IMR-90 (cell line): ENCODE measurements at regions of chr1 and their contacts with region 1.

Region 1: DNA sequence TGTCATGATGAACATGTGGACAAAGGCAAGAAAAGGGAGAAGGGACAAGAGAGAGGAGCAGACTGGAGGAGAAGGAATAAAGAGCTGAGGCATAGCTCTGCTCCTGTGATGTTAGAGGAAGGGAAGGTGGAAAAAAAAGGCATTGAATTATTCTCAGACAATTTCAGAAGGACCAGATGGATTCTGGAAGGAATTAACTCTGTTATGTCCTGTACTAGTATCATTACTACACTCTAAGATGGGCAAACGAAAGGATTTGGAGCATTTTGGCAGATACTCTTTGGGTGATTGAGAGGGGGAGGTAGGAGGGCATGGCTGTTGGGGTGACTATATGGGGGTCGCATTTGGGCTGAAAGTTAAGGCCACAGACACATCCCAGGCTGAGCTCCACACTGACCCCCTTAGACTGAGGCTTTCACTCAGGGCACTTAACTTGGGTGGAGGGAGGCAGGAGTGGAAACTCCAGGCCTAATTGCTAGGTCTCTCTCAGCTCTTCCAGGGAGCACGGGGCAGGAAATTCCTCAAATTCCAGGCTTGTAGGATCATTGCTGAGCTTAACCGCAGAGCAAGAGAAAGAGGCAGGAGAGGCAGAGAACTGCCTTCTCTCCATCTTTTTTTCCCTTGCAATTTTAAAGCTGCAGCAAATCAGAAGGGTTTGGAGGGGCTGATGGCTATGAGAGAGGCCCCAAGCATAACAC is 25.9 kb downstream of the KIRREL1 start:
- DNase-seq: peak; percentile 94
- ATAC-seq: peak; percentile 89
- H3K4me3 ChIP-seq: no peak overlapping the region
- H3K27ac ChIP-seq: peak overlapping the region; percentile 99
- H3K4me1 ChIP-seq: peaks cover 53% of the 10 kb centered on the region
- H3K27me3 ChIP-seq: no peaks in the 10 kb centered on the region
- CTCF ChIP-seq: 0 out of 2 replicates have a peak, but pooled peaks have one; percentile 6
- POLR2A ChIP-seq: no peak
- RAD21 ChIP-seq: peak; percentile 35; the same call in 1 of the 2 replicates

Region 2: DNA sequence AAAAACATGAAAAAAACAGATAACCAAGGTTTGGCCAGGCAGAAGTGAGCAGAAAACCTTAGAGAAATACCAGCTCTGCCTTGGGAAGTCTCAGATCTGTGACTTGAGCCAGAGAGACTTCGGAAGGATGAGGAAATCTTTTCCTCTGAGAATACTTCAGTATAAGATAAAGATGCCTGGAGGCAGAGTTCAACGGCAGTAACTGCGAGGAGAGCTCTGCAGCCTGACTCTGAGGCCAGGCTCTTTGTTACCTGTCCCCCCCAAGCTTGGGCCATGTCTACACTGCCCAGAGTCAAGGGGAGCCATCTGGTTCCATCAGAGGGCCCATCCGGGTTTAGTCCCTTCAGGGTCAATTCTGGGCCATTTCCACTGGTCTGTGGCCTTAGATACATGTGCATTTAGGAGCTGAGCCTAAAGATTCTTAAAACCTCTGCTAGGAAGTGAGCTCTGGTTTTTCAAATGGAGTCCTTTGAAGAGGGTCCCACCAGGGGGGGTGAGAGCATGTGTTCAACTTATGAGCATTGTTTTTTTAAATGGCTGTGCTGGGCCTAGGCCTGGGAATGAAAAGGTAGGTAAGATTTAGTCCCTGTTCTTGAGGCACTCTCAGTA is 17.2 kb before region 1 on chr1:
- CTCF ChIA-PET with region 1: interaction called, 3 read pairs
- POLR2A ChIA-PET with region 1: interaction called, 4 read pairs
- dilution Hi-C with region 1: no loop called
- in situ Hi-C with region 1: no loop called
- intact Hi-C with region 1: loop called (anchors 2 kb)
- DNase-seq: peak; percentile 51
- ATAC-seq: peak; percentile 47
- H3K4me3 ChIP-seq: no peak overlapping the region
- H3K27ac ChIP-seq: peak overlapping the region; percentile 93
- H3K4me1 ChIP-seq: peaks cover 54% of the 10 kb centered on the region
- H3K27me3 ChIP-seq: no peaks in the 10 kb centered on the region
- CTCF ChIP-seq: peak; percentile 33; the same call in 1 of the 2 replicates
- POLR2A ChIP-seq: no peak
- RAD21 ChIP-seq: peak; percentile 30; the same call in 1 of the 2 replicates

Region 3: DNA sequence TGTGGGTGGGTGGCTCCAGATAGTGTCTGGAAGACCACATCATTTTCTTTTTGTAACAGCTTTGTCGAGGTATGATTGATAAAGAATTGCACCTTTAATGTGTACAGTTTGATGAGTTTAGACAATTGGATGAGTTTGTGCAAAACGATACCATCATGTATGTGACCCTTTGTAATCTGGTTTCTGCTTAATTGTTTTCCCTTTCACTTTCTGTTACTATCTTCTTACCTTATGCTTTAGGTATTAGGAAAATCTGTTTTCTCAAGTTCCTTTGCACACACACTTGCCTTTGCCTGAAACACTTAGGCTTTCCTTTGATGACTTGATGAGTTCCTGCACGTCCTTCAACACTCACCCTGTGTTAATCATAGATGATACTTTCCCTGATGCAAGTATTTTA is 592.6 kb after region 1 on chr1:
- CTCF ChIA-PET with region 1: no interaction called
- POLR2A ChIA-PET with region 1: no interaction called
- dilution Hi-C with region 1: no loop called
- in situ Hi-C with region 1: no loop called
- intact Hi-C with region 1: no loop called
- DNase-seq: no peak
- ATAC-seq: no peak
- H3K4me3 ChIP-seq: no peak overlapping the region
- H3K27ac ChIP-seq: no peak overlapping the region
- H3K4me1 ChIP-seq: no peaks in the 10 kb centered on the region
- H3K27me3 ChIP-seq: no peaks in the 10 kb centered on the region
- CTCF ChIP-seq: no peak
- POLR2A ChIP-seq: no peak
- RAD21 ChIP-seq: no peak